ENCODE measurements at regions of chr4 and their contacts with region 1.

Region 1: GRCh38 chr4:183098723-183099536 is at the start of gene WWC2:
- DNase-seq: peak; percentile 22 to 94
- H3K4me3 ChIP-seq: peak within 1 kb of the TSS; percentile 79 to 98
- H3K27ac ChIP-seq: peak within 1 kb of the TSS; percentile 94 to 98
- H3K4me1 ChIP-seq: peaks cover 0 to 10% of the 10 kb centered on the region in 2 donors
- H3K27me3 ChIP-seq: no peaks in the 10 kb centered on the region
- CTCF ChIP-seq: peak in 1 of 3 experiments; percentile 26
- total RNA-seq, gene WWC2: 3.8 TPM

Region 2: GRCh38 chr4:182917182-182918043 is 181.5 kb before region 1 on chr4 and contains the start of gene DCTD:
- intact Hi-C with region 1: loop called (anchors 10 kb)
- DNase-seq: peak; percentile 23 to 88
- H3K4me3 ChIP-seq: peak within 1 kb of the TSS; percentile 76 to 87
- H3K27ac ChIP-seq: peak within 1 kb of the TSS; percentile 86 to 99
- H3K4me1 ChIP-seq: peaks cover 0 to 8% of the 10 kb centered on the region in 2 donors
- H3K27me3 ChIP-seq: no peaks in the 10 kb centered on the region
- CTCF ChIP-seq: peak in 2 of 3 experiments; percentile 38 to 44
- total RNA-seq, gene DCTD: 17.2 TPM

Region 3: DNA sequence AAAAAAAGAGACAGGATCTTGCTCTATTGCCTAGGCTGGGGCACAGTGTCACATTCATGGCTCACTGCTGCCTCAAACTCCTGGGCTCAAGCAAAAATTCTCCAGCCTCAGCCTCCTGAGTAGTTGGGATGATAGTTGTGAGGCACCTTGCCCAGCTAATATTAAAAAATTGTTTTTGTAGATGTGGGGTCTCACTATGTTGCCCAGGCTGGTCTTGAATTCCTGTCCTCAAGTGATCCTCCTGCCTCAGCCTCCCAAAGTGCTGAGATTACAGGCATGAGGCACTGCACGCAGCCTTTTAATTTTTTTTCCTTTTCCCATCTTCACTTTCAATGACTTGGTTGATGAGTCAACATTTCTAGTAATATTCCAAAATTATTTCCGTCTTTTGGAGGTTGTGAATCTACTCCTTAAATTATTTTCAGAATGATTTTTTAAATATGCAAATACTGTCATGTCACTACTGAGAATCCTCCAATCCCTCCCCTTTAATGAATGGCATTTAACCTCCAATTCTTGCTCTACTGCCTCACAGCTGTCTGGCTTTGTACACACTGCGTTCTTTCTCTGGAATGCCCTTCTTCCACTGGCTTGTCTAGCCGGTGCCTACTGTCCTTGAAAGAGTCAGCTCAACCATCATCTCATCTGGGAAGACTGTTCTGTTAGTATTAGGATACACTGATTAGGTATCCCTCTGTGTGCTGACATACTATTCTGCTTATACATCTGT is 154.3 kb before region 1 on chr4:
- intact Hi-C with region 1: no loop called
- DNase-seq: no peak
- H3K4me3 ChIP-seq: no peak overlapping the region
- H3K27ac ChIP-seq: no peak overlapping the region
- H3K4me1 ChIP-seq: no peaks in the 10 kb centered on the region
- H3K27me3 ChIP-seq: no peaks in the 10 kb centered on the region
- CTCF ChIP-seq: no peak

Region 4: DNA sequence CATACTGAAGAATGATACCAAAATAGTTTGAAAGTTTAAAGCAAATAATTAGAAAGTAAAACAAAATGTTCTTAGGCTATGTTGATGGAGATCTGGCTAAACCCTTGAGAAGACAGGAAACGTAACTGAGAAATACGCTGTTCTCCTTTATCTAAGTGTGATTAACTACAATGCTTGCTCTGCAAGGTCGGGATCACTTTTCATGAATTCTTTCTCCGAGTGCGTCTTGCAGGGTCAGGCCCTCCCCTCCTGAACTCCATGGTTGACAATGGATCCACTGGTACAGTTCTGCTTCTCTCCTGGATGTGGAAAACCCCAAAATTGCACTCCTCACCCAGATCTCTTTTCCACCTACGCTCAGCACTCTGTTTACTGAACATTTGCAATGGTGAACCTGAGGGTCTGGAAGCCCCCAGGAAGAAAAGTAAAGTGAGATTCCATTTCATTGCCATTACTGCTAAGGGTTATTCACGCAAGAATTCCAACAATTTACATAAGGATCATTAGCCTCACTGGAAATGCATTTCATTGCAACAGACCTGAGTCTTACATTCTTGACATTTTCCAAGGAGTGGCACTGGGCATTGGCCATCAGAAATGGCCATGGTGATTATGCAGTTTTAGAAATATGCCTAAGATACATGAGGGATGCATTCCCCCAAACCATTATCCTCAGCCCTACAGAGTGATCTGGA is 24.5 kb before region 1 on chr4:
- intact Hi-C with region 1: loop called (anchors 2 kb)
- DNase-seq: no peak
- H3K4me3 ChIP-seq: no peak overlapping the region
- H3K27ac ChIP-seq: no peak overlapping the region
- H3K4me1 ChIP-seq: no peaks in the 10 kb centered on the region
- H3K27me3 ChIP-seq: no peaks in the 10 kb centered on the region
- CTCF ChIP-seq: no peak

Region 5: GRCh38 chr4:183118585-183118984 is 19.7 kb after region 1 on chr4:
- intact Hi-C with region 1: loop called (anchors 1 kb)
- DNase-seq: no peak
- H3K4me3 ChIP-seq: no peak overlapping the region
- H3K27ac ChIP-seq: peak overlapping the region; percentile 3 to 32
- H3K4me1 ChIP-seq: peaks cover 0 to 12% of the 10 kb centered on the region in 2 donors
- H3K27me3 ChIP-seq: no peaks in the 10 kb centered on the region
- CTCF ChIP-seq: no peak

Region 6: DNA sequence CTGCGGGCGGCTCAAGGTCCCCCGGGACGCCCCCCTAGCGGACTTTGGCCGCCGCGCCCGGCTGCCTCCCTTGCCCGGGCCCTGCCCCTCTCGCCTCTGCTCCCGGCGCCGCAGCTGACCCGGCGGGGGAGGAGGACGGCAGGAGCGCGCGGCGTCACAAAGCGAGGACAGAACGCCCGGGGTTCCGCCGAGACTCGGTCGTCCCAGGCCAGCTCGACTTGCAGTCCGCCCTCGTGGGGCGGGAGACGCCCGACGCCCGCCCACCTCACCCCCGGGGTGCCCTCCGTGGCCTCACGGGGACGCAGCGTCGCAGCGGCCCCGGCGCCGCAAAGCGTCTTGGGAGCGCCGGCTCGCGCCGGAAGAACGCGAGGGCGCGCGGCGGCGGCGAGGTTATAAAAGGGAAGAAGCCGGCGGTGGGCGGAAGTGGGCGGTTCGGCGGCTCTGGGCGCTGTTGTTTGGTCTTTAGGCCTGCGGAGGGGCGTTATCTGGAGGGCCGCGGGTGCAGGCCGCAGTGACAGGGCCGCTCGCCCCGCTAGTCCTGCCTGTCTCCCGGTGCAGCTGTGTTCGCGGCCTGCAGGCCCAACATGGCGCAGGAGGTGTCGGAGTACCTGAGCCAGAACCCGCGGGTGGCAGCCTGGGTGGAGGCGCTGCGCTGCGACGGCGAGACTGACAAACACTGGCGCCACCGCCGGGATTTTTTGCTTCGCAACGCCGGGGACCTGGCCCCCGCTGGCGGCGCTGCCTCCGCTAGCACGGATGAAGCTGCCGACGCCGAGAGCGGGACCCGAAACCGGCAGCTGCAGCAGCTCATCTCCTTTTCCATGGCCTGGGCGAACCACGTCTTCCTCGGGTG is 345.5 kb after region 1 on chr4 and contains the start of gene CDKN2AIP:
- intact Hi-C with region 1: loop called (anchors 2 kb)
- DNase-seq: peak; percentile 64 to 96
- H3K4me3 ChIP-seq: peak within 1 kb of the TSS; percentile 89 to 96
- H3K27ac ChIP-seq: peak within 1 kb of the TSS; percentile 95 to 99
- H3K4me1 ChIP-seq: peaks cover 12 to 30% of the 10 kb centered on the region in 2 donors
- H3K27me3 ChIP-seq: no peaks in the 10 kb centered on the region
- CTCF ChIP-seq: peak in 1 of 3 experiments; percentile 17
- total RNA-seq, gene CDKN2AIP: 34.5 TPM

Region 7: DNA sequence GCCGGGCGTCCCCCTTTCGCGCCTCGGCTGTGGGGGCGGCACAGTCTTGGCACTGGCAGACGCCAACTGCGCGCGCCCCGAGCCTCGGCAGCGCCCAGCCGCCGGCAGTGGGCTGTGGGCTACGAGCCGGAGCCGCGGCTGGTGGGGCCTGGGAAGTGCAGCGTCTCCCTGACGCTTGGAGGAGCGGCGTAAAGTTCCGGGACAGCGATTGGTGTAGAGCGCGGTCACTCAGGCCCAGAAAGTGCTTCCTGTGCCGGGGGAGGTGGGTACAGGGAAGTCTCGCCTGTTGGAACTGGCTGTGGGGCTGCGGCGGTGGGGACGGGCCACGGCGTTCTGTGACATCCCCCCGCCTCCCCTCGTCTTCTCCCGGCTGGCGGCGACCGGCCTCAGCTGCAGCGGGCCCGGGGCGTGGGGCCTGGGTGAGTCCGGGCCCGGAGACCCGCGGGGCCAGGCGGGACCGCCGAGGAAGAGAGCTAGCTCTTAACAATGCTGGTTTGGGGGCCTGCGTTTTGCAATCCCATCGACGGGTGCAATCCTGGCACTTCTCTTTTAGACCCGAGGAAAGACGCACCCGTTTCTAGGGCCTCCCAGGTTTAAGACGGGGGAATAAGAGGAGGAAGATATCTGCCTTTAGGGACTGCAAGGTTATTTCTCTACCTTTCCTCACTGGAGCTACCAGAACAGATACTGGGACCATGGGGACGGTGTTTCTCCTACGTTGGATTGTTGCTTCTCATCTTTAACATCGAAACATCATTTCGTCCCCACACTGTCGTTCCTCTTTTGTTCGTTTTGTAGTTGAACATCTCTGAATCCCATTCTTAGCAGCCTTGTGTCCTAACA is 560.3 kb after region 1 on chr4 and contains the starts of genes RWDD4 and TRAPPC11:
- intact Hi-C with region 1: loop called (anchors 2 kb)
- DNase-seq: peak; percentile 91 to 98
- H3K4me3 ChIP-seq: peak within 1 kb of the TSS; percentile 71 to 98
- H3K27ac ChIP-seq: peak within 1 kb of the TSS; percentile 89 to 90
- H3K4me1 ChIP-seq: peaks cover 3 to 14% of the 10 kb centered on the region in 2 donors
- H3K27me3 ChIP-seq: no peaks in the 10 kb centered on the region
- CTCF ChIP-seq: peak; percentile 38 to 45 (median 45)
- total RNA-seq, gene RWDD4: 38.6 TPM
- total RNA-seq, gene TRAPPC11: 124 TPM

Region 8: DNA sequence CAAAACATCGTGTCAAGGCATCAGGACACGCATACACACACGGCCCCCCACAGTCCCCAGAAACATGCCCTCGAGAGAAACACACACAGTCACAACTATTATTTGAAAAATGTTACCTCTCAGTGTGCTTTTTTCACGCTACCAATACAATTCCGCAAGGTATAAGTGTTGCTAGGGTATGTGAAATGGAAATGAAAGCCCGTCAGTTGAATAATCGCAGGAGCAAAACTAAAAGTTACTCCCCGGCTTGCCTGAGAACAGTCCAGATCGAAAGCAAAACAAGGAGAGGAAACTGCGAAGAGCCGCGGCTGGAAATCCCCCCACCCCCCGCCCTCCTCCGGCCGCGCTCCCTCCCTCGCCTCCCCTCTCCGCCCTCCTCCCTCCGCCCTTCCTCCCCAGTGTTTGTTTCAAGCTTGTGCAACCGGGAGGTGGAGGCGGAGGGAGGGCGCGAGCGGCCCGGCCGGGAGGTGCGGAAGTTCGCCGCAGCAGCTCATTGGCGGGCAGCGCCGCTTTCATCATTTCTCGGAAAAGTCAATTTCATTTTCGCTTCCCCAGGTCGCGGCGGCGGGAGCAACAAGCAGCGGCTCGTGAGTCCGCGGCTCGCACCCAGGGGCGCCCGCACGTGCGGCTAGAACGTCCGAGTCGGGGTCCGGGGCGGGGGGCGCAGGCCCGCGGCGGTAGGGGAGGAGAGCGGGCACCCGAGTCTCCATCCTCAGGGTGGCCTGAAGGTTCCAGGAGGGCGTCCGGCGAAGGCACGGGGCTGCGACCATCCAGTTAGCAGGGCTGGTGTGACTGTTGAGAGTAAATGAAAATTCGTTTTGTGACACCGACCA is 1375.5 kb after region 1 on chr4 and contains the start of gene IRF2:
- intact Hi-C with region 1: loop called (anchors 5 kb)
- DNase-seq: peak; percentile 87 to 98
- H3K4me3 ChIP-seq: peak within 1 kb of the TSS; percentile 89 to 95
- H3K27ac ChIP-seq: peak within 1 kb of the TSS; percentile 96 to 98
- H3K4me1 ChIP-seq: peaks cover 0 to 18% of the 10 kb centered on the region in 2 donors
- H3K27me3 ChIP-seq: no peaks in the 10 kb centered on the region
- CTCF ChIP-seq: peak in 2 of 3 experiments; percentile 7 to 15
- total RNA-seq, gene IRF2: 39.6 TPM

Measured in ascending aorta (tissue), 2 donors.